ENCODE measurements at regions of chr9 and their contacts with region 1.

Region 1: GRCh38 chr9:93962561-93963440 is 7.6 kb upstream of the BARX1 start:
- DNase-seq: peak; percentile 53
- H3K4me3 ChIP-seq: no peak overlapping the region
- H3K27ac ChIP-seq: no peak overlapping the region
- H3K27me3 ChIP-seq: peaks cover 54% of the 10 kb centered on the region
- CTCF ChIP-seq: peak; percentile 80

Region 2: GRCh38 chr9:93682232-93682968 is 280.4 kb before region 1 on chr9:
- CTCF ChIA-PET with region 1: interaction called, 73 read pairs
- POLR2A ChIA-PET with region 1: no interaction called
- DNase-seq: no peak
- H3K4me3 ChIP-seq: no peak overlapping the region
- H3K27ac ChIP-seq: no peak overlapping the region
- H3K27me3 ChIP-seq: no peaks in the 10 kb centered on the region
- CTCF ChIP-seq: peak; percentile 84

Region 3: DNA sequence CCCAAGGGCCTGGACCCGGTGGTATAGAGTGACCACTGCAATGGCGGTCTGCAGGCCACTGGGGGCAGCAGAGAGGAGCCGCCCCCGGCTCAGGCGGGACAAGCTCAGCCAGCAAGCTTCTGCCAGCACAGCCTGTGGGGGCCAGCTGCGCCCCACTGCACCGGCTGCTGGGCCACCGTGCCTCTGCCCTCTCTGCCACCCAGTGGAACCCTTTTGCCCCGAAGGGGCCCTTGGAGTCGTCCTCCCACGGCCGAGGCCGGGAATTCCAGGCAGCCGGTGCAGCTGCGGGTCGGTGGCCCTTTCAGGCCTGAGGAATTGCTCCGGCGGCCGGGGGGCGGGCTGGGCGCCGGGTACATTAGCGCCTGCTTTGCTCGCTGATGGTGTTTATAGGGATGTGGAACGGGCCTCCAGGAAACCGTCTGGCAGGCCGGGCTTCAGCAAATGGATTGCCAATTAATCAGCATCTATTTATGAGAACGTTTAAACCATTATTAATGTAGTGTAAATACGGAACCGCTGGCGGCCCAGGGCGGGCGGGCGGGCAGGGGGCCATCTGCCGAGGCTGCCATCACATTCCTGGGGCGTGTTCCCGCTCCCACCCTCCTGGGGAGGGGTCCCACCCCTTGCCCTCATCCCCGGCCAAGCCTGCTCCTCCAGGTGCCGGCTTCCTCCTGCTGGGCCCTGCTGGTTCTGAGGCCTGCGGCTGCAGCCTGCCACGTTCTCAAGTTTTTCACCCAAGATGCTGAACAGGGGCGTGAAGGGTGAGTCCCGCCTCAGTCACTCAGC is 135.1 kb before region 1 on chr9:
- CTCF ChIA-PET with region 1: interaction called, 10 read pairs
- POLR2A ChIA-PET with region 1: no interaction called
- DNase-seq: peak; percentile 10
- H3K4me3 ChIP-seq: peak overlapping the region; percentile 35
- H3K27ac ChIP-seq: no peak overlapping the region
- H3K27me3 ChIP-seq: peaks cover 9% of the 10 kb centered on the region
- CTCF ChIP-seq: peak; percentile 81

Region 4: DNA sequence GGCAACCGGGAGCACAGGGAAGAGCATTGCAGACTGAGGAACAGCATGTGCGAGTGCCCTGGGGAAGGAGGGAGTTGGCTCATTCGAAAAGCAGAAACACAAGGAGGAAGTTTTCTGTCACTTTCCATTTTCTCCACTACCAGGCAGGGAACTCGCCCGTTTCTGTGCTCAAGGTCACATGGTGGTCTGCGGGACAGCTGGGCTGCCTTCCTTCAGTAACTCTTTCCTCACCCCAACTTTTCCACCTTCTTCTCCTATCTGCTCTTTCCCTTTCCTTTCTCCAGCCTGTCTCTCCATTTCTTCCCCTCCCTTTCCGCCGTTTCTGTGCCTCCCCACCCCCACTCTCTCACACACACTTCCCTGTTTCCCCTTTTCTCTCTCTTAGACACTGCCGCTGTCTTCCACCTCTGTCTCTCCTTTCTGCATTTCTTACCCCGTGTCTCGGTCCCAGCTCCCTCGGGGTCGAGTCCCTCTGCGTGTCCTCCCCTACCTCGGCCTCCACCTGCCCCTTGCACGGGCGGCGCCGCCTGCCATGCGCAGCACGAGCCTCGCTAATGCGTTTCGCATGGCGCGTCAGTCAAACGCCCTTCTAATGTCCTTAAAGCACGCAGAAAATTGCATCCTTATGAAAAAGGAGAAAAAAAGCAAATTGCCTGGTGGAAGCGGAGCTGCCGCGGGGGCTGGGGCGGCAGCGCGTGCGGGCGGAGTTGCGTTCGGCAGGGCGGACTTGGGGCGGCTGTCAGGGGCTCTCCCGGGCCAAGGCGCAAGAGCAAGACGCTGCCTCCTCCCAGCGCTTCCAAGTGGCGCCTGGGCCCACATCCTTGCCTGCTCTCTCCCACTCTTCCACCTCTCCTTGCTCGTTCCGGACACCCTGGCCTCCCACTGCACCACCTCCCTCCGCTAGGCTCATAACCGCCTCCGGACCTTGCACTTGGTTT is 17.1 kb before region 1 on chr9:
- CTCF ChIA-PET with region 1: interaction called, 10 read pairs
- POLR2A ChIA-PET with region 1: no interaction called
- DNase-seq: no peak
- H3K4me3 ChIP-seq: no peak overlapping the region
- H3K27ac ChIP-seq: no peak overlapping the region
- H3K27me3 ChIP-seq: peaks cover 80% of the 10 kb centered on the region
- CTCF ChIP-seq: no peak

Measured in AG04450 (cell line).